ENCODE measurements at regions of chr4 and their contacts with region 1.

Region 1: GRCh38 chr4:78601013-78601412 is 49.4 kb downstream of the ANXA3 start:
- DNase-seq: peak in 1 of 2 donors; percentile 20
- ATAC-seq: peak in 4 of 8 donors; percentile 39 to 75 (median 62)
- H3K4me3 ChIP-seq: no peak overlapping the region
- H3K27ac ChIP-seq: no peak overlapping the region
- H3K4me1 ChIP-seq: peaks cover 0 to 26% (median 18%) of the 10 kb centered on the region in 9 donors
- H3K27me3 ChIP-seq: no peaks in the 10 kb centered on the region
- CTCF ChIP-seq: no peak

Region 2: DNA sequence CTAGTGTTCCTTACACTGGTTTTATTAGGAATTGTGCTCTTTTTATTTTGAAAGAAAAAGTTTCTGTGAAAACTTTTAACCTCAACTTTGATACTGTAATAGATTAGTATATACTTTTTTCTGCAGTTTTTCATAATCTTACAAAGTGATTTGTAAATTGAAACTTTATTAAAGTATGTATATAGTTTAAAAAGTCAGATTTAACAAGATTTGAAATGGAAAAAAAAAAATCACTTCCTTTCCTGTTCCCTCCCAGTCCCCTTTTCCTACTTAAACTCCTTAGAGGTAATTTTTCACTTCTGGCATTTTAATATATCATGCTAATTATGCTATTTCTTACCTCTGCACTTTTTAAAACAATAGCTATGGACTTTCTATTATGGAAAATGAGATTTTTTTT is 288.9 kb after region 1 on chr4:
- intact Hi-C with region 1: loop called in 1 of 10 experiments (anchors 1 kb)
- DNase-seq: no peak
- ATAC-seq: no peak
- H3K4me3 ChIP-seq: no peak overlapping the region
- H3K27ac ChIP-seq: no peak overlapping the region
- H3K4me1 ChIP-seq: peaks cover 0 to 9% (median 0%) of the 10 kb centered on the region in 9 donors
- H3K27me3 ChIP-seq: no peaks in the 10 kb centered on the region
- CTCF ChIP-seq: no peak